Activated CD4-positive, alpha-beta memory T cell treated with anti-CD3 and anti-CD28 coated beads for 36 hours (primary cell): ENCODE measurements at regions of chr19 and their contacts with region 1.

Region 1: DNA sequence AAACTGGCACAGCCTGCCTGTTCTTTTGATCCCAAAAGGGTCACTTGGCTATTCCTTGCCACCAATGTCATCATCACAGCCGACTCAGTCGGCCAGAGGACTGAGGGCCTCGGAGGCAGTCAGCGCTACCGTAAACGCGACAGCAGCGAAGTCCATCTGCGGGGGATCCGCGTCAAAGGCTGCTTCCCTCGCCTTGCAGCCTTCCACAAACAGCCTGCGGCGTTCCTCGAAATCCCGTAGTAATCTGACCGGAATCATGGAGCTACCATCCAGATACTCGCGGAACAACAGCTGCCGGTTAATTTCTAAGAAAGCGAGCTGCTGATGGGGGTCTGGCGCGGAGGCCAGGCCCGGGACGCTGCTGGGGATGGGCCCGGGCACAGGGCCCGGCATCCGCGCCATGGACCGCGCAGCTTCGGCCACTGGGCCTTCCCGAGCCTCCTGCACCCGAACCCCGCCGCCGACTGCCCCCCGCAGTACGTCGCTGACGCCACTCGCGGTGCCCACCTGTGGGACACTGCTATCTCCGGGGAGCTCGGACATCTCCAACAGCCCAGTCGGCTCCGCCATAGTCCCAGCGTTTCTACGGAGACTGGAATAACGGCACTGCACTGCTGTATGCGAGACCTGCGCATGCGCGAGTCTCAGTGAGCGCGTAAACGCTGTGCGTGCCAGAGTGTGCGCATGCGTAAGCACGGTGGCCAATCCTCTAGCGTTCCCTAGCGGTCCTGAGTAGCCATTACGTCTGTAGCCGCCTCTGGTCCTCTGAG is at the start of gene EID2B:
- DNase-seq: peak; percentile 96
- H3K4me3 Mint-ChIP-seq: peak within 1 kb of the TSS; percentile 91
- H3K27ac Mint-ChIP-seq: peak within 1 kb of the TSS; percentile 65
- H3K4me1 Mint-ChIP-seq: peaks cover 20% of the 10 kb centered on the region
- H3K27me3 Mint-ChIP-seq: no peaks in the 10 kb centered on the region
- total RNA-seq, gene EID2B: 3.3 to 3.8 TPM

Region 2: DNA sequence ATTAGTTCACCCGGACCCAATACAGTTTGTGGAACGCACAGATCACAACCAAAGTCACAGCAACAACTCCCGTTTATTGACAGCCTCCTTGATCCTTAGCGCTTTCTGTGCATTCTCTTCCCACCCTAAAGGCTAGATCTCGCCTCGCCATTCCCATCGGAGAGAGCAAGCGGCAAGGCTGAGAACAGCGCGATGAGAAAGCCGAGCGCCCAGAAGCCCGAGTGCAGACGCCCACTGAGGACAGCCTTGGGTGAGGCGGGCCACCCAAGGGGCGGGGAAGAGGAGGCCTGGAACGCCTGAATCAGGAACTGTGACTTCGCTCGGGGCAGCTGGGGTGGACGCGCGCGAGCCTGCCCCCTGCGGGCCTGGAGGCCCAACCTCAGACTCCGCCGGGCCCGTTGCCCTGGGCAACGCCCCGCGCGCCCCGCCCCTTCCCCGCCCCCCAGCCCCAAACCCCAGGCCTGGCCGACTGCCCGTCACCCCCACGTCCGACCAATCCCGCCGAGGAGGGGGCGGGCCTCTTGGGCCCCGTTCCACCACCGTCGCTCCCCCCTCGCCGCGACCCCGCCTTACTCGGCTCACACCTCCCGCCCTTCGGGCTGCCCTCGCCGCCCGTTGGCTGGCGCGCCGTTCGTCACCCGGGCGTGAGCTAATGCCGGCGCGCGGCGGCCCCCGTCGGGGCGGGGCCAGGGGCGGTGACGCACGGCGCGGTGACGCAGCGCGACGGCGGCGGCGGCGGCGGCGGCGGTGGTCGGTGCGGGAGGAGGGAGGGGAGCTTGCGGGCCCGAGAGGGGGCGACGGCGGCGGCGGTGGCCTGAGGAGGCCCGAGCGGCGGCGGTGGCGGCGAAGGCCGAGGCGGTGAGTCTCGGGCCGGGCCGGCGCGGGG is 190.5 kb before region 1 on chr19 and contains the start of gene SAMD4B:
- CTCF ChIA-PET with region 1: no interaction called
- POLR2A ChIA-PET with region 1: no interaction called
- intact Hi-C with region 1: loop called (anchors 5 kb)
- DNase-seq: peak; percentile 100
- H3K4me3 Mint-ChIP-seq: peak within 1 kb of the TSS; percentile 98
- H3K27ac Mint-ChIP-seq: peak within 1 kb of the TSS; percentile 91
- H3K4me1 Mint-ChIP-seq: peaks cover 65% of the 10 kb centered on the region
- H3K27me3 Mint-ChIP-seq: no peaks in the 10 kb centered on the region
- total RNA-seq, gene SAMD4B: 49.4 to 51.3 TPM

Region 3: GRCh38 chr19:39397360-39398296 is 134.8 kb before region 1 on chr19:
- CTCF ChIA-PET with region 1: interaction called, 10 read pairs
- POLR2A ChIA-PET with region 1: no interaction called
- intact Hi-C with region 1: no loop called
- DNase-seq: peak; percentile 96
- H3K4me3 Mint-ChIP-seq: peak overlapping the region; percentile 3
- H3K27ac Mint-ChIP-seq: peak overlapping the region; percentile 85
- H3K4me1 Mint-ChIP-seq: peaks cover 57% of the 10 kb centered on the region
- H3K27me3 Mint-ChIP-seq: no peaks in the 10 kb centered on the region

Region 4: DNA sequence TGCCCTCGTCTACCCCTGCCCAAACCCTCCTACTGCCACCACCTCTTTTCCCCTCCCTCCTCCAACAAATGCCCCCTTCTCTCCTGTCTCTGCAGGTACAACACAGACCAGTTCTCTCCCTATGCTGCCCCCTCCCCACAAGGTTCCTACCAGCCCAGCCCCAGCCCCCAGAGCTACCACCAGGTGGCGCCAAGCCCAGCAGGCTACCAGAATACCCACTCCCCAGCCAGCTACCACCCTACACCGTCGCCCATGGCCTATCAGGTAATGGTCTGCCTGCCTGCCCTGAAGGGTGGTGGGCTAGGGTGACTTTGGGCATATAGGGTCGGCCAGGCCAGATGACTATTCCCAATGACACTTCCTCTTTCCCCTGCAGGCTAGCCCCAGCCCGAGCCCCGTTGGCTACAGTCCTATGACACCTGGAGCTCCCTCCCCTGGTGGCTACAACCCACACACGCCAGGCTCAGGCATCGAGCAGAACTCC is 58.2 kb before region 1 on chr19:
- CTCF ChIA-PET with region 1: interaction called, 43 read pairs
- POLR2A ChIA-PET with region 1: no interaction called
- intact Hi-C with region 1: loop called (anchors 5 kb)
- DNase-seq: peak; percentile 76
- H3K4me3 Mint-ChIP-seq: no peak overlapping the region
- H3K27ac Mint-ChIP-seq: no peak overlapping the region
- H3K4me1 Mint-ChIP-seq: peaks cover 25% of the 10 kb centered on the region
- H3K27me3 Mint-ChIP-seq: no peaks in the 10 kb centered on the region

Region 5: DNA sequence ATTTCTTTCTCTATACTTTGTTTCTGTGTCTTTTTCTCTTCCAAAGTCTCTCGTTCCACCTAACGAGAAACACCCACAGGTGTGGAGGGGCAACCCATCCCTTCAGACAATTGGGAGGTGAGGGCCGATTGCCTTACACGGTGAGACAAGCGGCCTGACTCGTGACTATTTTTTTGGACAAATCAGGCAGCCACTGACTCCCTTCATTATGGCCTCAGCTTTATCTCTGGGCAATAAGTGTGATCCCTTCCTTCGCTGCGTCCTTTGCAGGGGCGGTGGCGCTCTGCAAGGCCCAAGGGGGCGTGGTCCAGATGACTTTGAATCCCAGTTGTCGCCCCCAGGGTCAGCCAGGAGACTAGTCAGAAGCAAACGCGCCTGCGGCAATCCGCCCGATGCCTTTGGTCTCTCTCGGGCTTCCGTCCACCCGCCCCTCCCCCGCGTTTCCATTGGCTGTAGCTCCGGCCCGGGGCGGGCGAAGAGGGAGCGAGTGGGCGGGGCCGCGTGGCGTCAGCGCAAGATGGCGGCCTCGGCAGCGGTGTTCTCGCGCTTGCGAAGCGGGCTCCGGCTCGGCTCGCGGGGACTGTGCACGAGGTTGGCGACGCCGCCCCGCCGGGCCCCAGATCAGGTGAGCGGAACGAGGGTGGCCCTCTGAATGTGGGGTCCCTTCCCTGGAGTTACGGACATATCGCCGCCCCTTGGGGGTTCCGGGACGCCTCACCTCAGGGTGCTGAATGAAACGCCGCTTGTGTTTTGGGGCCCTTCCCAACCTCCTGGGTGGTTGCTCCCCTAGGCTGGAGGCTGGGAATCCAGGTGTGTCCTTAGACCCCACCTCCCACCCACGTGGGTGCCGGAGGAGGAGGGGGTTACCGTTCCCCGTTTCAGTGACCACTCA is 51.8 kb before region 1 on chr19 and contains the start of gene TIMM50:
- CTCF ChIA-PET with region 1: interaction called, 43 read pairs
- POLR2A ChIA-PET with region 1: interaction called, 3 read pairs
- intact Hi-C with region 1: loop called (anchors 2 kb)
- DNase-seq: peak; percentile 98
- H3K4me3 Mint-ChIP-seq: peak within 1 kb of the TSS; percentile 82
- H3K27ac Mint-ChIP-seq: peak within 1 kb of the TSS; percentile 78
- H3K4me1 Mint-ChIP-seq: peaks cover 25% of the 10 kb centered on the region
- H3K27me3 Mint-ChIP-seq: no peaks in the 10 kb centered on the region
- total RNA-seq, gene TIMM50: 83.1 to 86.7 TPM

Region 6: GRCh38 chr19:39502640-39503417 is 29.6 kb before region 1 on chr19:
- CTCF ChIA-PET with region 1: interaction called, 59 read pairs
- POLR2A ChIA-PET with region 1: no interaction called
- intact Hi-C with region 1: loop called (anchors 2 kb)
- DNase-seq: peak; percentile 84
- H3K4me3 Mint-ChIP-seq: no peak overlapping the region
- H3K27ac Mint-ChIP-seq: no peak overlapping the region
- H3K4me1 Mint-ChIP-seq: peaks cover 33% of the 10 kb centered on the region
- H3K27me3 Mint-ChIP-seq: peaks cover 56% of the 10 kb centered on the region

Region 7: GRCh38 chr19:39641773-39642172 is 109.4 kb after region 1 on chr19:
- CTCF ChIA-PET with region 1: no interaction called
- POLR2A ChIA-PET with region 1: no interaction called
- intact Hi-C with region 1: no loop called
- DNase-seq: no peak
- H3K4me3 Mint-ChIP-seq: no peak overlapping the region
- H3K27ac Mint-ChIP-seq: no peak overlapping the region
- H3K4me1 Mint-ChIP-seq: no peaks in the 10 kb centered on the region
- H3K27me3 Mint-ChIP-seq: peaks cover 62% of the 10 kb centered on the region